MCF 10A (cell line): ENCODE measurements at regions of chr10 and their contacts with region 1.

Region 1: DNA sequence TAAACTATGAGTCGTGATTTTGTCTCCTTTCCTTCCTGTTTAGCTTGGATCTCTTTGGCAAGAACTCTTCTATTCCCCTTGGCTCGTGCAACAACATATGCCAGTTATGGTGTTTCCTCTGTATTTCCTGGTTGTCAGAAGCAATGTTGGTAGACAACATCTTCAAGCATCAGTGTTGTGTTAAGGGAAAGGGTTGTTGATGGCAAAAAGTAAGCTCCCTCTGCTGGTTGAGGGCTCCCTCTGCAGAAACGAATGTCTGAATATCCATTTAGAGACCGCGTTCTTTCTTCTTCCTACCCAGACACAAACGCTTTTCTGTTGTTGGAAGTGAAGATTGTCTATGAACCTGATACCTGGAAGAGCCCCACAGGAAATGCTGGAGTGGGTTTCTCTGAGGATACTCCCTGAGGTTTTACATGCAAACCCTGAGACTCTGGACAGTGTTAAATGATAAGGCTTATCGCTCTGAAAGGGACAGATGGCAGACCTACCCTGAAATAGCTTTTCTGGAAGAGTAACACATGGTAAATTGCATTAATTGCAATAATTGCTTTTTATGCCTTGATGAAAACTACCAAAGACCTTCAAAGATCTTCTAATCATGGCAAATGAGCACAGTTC is 23.5 kb upstream of the C1QL3 start:
- DNase-seq: peak; percentile 48
- H3K4me3 Mint-ChIP-seq: no peak overlapping the region
- H3K27ac Mint-ChIP-seq: no peak overlapping the region
- H3K4me1 Mint-ChIP-seq: peaks cover 5% of the 10 kb centered on the region
- H3K27me3 Mint-ChIP-seq: peaks cover 11% of the 10 kb centered on the region
- CTCF ChIP-seq: peak; percentile 40

Region 2: GRCh38 chr10:15879058-15879457 is 666.2 kb before region 1 on chr10:
- CTCF ChIA-PET with region 1: interaction called, 4 read pairs
- POLR2A ChIA-PET with region 1: interaction called, 3 read pairs
- intact Hi-C with region 1: loop called (anchors 1 kb)
- DNase-seq: peak; percentile 47
- H3K4me3 Mint-ChIP-seq: no peak overlapping the region
- H3K27ac Mint-ChIP-seq: no peak overlapping the region
- H3K4me1 Mint-ChIP-seq: no peaks in the 10 kb centered on the region
- H3K27me3 Mint-ChIP-seq: peaks cover 70% of the 10 kb centered on the region
- CTCF ChIP-seq: peak; percentile 58

Region 3: GRCh38 chr10:16049050-16049449 is 496.2 kb before region 1 on chr10:
- CTCF ChIA-PET with region 1: no interaction called
- POLR2A ChIA-PET with region 1: no interaction called
- intact Hi-C with region 1: loop called (anchors 5 kb)
- DNase-seq: peak; percentile 31
- H3K4me3 Mint-ChIP-seq: no peak overlapping the region
- H3K27ac Mint-ChIP-seq: no peak overlapping the region
- H3K4me1 Mint-ChIP-seq: peaks cover 7% of the 10 kb centered on the region
- H3K27me3 Mint-ChIP-seq: peaks cover 44% of the 10 kb centered on the region
- CTCF ChIP-seq: no peak

Region 4: GRCh38 chr10:16116404-16117304 is 428.6 kb before region 1 on chr10:
- CTCF ChIA-PET with region 1: no interaction called
- POLR2A ChIA-PET with region 1: no interaction called
- intact Hi-C with region 1: loop called (anchors 1 kb)
- DNase-seq: peak; percentile 31
- H3K4me3 Mint-ChIP-seq: no peak overlapping the region
- H3K27ac Mint-ChIP-seq: no peak overlapping the region
- H3K4me1 Mint-ChIP-seq: no peaks in the 10 kb centered on the region
- H3K27me3 Mint-ChIP-seq: peaks cover 11% of the 10 kb centered on the region
- CTCF ChIP-seq: peak; percentile 41

Region 5: GRCh38 chr10:16436758-16437539 is 108.3 kb before region 1 on chr10 and contains the start of gene PTER:
- CTCF ChIA-PET with region 1: no interaction called
- POLR2A ChIA-PET with region 1: no interaction called
- intact Hi-C with region 1: loop called (anchors 1 kb)
- DNase-seq: peak; percentile 98
- H3K4me3 Mint-ChIP-seq: peak within 1 kb of the TSS; percentile 91
- H3K27ac Mint-ChIP-seq: peak within 1 kb of the TSS; percentile 94
- H3K4me1 Mint-ChIP-seq: peaks cover 29% of the 10 kb centered on the region
- H3K27me3 Mint-ChIP-seq: no peaks in the 10 kb centered on the region
- CTCF ChIP-seq: no peak
- total RNA-seq, gene PTER: 50.8 and 53.2 TPM in 2 replicates